GM10248 (cell line): ENCODE measurements at regions of chr3 and their contacts with region 1.

Region 1: GRCh38 chr3:59401924-59402323 is 352.1 kb upstream of the CFAP20DC start:
- DNase-seq: no peak
- CTCF ChIP-seq: no peak

Region 2: GRCh38 chr3:59418836-59419235 is 16.9 kb after region 1 on chr3:
- CTCF ChIA-PET with region 1: interaction called, 10 read pairs
- POLR2A ChIA-PET with region 1: no interaction called
- DNase-seq: no peak
- CTCF ChIP-seq: no peak

Region 3: DNA sequence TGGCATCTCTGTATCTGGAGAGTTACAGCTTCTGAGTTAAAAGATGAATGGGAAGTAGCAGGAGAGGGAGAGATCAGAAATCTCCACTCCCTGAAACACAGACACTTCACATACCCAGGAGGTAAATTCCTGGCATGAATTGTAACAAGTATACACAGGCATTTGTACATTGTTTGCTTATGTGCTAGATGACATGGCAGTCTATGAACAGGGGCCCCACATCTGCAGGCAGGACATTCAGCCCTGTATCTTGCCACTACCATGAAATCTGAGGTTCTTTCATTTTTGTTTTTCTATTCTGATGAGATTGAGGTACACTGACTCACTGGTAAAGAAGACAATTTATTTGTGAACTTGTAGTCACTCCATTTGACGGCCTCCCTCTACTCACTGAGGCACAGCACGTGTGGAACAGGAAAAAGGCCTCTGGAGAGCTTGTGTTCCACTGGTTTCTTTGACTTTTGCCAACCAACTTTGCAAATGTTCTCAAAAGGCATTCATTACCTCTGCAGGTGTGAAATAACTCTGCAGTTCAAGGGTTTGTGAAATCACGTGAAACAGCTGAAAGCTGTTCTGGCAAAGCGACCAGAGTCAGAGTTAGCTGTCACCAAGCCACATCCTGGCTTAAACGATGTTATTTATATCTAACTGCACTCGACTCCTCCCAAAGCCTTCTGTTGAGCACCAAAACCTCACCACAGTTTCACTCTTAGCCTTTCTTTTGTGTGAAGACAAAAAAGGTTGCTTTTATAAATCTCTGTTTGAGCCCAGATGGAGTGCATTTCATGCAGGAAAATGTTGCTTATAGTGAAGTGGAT is 49.2 kb after region 1 on chr3:
- CTCF ChIA-PET with region 1: no interaction called
- POLR2A ChIA-PET with region 1: no interaction called
- DNase-seq: peak; percentile 70
- CTCF ChIP-seq: no peak

Region 4: DNA sequence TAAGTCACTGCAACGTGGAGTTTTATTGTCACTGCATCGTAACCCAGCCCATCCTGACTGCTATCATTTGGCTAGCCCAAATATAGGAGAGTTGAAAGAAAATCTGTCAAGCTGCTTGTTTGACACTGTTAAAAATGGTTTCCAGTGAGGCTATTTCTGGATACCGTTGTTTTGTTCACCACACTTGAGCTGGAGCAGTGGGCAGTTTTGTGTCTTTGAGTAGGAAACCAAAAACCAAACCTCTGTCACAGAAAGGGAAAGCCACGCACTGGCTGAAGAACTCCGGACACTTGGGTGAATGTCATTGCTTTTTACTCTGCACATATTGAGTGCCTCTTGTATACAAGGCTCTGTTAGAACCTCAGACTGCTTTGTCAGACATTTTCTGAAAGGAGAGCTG is 94.3 kb after region 1 on chr3:
- CTCF ChIA-PET with region 1: no interaction called
- POLR2A ChIA-PET with region 1: no interaction called
- DNase-seq: no peak
- CTCF ChIP-seq: no peak

Region 5: DNA sequence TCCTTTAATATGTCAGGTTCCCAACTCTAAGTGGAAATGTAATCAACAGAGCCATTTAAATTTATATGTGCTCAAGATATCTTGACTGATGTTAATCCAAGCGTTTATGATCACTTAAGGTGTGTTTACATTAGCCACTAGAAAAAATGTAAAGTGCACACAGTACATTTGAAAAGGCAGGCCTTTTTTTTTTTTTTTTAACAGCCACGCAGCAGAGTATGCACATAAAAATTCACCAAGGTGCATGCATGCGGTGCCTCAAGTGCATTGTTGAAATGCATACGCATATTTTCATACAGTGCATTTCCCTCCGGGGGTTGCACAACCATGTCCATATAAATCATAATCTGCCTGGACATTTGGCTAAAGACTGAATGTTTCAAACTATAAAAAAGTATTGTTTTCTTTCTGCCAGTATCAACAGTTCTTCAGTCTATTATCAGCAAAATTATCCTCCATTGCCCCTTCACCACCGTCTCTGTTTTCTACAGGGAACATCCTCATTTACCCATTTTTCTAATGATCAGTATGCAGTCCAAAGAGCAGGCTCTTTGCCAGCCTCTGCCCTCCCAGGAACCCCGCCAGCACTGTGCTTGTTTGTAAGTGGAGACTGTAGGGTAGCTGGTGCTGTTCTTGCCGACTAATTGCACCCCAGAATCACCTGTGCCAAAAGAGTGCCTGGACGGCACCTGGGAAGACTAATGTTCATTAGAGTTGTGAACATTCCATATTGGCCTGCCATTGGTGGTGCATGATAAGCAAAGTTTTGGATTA is 259.1 kb after region 1 on chr3:
- CTCF ChIA-PET with region 1: no interaction called
- POLR2A ChIA-PET with region 1: no interaction called
- DNase-seq: no peak
- CTCF ChIP-seq: no peak